ENCODE measurements at regions of chr15 and their contacts with region 1.

Region 1: DNA sequence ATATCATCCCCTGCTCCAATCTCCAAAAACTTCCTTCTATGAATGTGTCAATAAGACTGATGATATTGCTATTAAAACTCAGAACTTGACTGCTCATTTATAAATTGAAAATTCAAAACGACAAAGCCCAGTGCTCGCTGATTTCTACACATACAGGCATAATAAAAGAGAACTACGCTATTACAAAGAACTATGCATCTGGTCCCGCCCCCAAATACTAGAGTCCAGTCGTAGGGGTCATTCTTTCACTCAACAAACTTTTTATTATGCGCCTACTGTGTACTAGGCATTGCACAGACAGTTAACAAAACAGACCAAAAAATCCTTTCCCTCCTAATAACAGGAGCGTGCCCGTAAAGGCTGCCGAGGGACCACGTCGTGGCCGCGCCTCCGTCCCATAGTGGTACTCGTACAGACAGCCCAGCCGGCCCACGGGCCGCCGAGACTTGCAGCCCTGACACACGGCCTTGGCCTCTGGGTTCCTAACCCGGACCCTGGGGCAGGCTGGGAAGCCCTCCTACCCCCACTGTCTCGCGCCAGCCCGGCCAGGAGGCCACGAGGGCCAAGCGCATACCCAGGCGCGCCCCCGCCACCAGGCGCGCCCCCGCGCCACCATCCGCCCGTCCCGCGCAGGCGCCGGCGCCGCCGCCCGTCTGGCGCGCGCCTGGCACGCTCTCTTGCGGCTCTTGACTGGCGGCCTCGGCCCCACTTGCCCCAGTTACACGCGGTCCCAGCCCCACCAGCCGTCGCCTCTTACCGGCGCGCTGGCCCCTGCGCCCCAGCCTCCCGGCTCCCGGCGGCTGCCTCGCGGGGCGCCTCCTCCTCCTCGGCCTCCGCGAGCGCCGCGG is 757 bp downstream of the AVEN start:
- DNase-seq: peak; percentile 30 to 92 (median 82)

Region 2: GRCh38 chr15:34101366-34102175 is 63.3 kb after region 1 on chr15 and contains the starts of genes EMC7 and PGBD4:
- intact Hi-C with region 1: loop called (anchors 2 kb)
- DNase-seq: peak; percentile 96 to 100 (median 99)

Measured in head of caudate nucleus (tissue), 42 donors.